ENCODE measurements at regions of chr10 and their contacts with region 1.

Region 1: DNA sequence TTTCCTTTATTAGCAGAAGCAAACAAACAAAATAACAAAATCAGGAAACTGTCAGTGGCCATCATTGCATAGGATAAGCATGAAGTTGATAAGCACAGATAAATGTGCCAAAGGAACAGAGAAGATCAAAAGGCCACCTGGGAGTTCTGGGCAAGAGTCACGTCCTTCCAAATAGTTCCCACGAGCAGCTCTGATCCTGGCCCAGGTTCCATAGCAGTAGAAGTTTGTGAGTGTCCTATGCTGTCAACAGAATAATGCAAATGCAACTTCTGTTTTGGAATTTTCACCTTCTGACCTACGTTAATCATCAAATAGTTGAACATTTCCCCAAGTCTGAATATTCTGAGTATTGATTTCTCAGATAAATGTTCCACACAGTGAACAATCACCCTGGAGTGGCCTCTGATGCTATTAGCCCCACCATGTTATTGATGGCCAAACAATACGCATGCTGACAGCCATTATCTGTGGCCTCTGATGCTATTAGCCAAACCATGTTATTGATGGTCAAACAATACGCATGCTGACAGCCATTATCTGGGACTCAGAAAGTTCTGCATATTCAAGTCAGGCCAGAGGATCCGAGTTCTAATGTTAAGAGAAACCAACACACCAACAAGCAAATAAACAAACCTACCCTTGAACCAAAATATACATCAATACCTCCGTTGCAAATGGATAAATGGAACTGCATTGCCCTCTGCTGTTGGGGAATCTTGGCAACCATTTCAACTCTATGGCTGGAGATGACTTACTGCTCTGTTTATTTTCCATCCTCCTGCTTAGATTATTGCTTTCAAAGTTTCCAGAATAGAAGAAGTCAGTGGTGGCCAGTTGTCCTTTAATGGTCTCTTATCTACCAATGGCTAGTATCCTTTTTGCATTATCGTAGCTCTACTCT is 63.3 kb downstream of the MRC1 start:
- DNase-seq: peak in 4 of 5 donors; percentile 11 to 28 (median 18)
- H3K4me3 ChIP-seq: no peak overlapping the region
- H3K4me3 Mint-ChIP-seq: no peak overlapping the region
- H3K27ac ChIP-seq: no peak overlapping the region
- H3K27ac Mint-ChIP-seq: no peak overlapping the region
- H3K4me1 ChIP-seq: no peaks in the 10 kb centered on the region
- H3K4me1 Mint-ChIP-seq: peaks cover 0 to 4% (median 1%) of the 10 kb centered on the region in 4 donors
- H3K27me3 ChIP-seq: no peaks in the 10 kb centered on the region
- H3K27me3 Mint-ChIP-seq: no peaks in the 10 kb centered on the region

Region 2: GRCh38 chr10:17847585-17848296 is 24.7 kb before region 1 on chr10:
- CTCF ChIA-PET with region 1: interaction called, 60 read pairs
- POLR2A ChIA-PET with region 1: no interaction called
- intact Hi-C with region 1: loop called (anchors 1 kb)
- DNase-seq: peak in 2 of 5 donors; percentile 6 to 7
- H3K4me3 ChIP-seq: no peak overlapping the region
- H3K4me3 Mint-ChIP-seq: no peak overlapping the region
- H3K27ac ChIP-seq: no peak overlapping the region
- H3K27ac Mint-ChIP-seq: no peak overlapping the region
- H3K4me1 ChIP-seq: no peaks in the 10 kb centered on the region
- H3K4me1 Mint-ChIP-seq: peaks cover 0 to 7% (median 1%) of the 10 kb centered on the region in 4 donors
- H3K27me3 ChIP-seq: no peaks in the 10 kb centered on the region
- H3K27me3 Mint-ChIP-seq: peaks cover 0 to 2% of the 10 kb centered on the region in 2 donors

Measured in CD4-positive, alpha-beta memory T cell (primary cell).